Psoas muscle (tissue), 8 donors: ENCODE measurements at regions of chr1 and their contacts with region 1.

Region 1: GRCh38 chr1:180243517-180244221 is 13.6 kb downstream of the LHX4 start:
- DNase-seq: no peak
- ATAC-seq: no peak
- H3K4me3 ChIP-seq: no peak overlapping the region
- H3K27ac ChIP-seq: no peak overlapping the region
- H3K4me1 ChIP-seq: no peaks in the 10 kb centered on the region
- H3K27me3 ChIP-seq: peaks cover 0 to 45% (median 5%) of the 10 kb centered on the region in 3 donors
- CTCF ChIP-seq: no peak

Region 2: DNA sequence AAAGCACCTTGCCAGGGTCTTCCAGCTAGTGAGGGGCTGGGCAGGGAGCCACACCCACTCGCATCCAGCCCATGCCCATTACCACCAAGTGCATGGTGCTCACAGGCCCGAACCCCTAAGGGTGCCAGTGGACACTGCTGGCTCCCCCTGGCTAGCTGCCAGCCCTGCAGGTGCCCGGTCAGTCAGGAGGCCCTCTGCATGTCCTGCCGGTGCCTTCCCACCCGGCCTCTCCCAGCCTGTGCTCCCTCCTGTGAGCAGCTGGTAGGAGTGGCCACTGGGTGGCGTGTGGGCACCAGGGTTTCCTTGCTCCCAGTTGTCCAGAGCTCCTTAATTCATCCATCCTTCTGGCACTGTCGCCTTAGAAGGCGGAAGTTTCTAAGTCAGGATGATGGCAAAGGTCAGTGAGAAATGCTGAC is 55.6 kb before region 1 on chr1:
- intact Hi-C with region 1: loop called in 1 of 2 experiments (anchors 2 kb)
- DNase-seq: peak in 1 of 2 donors; percentile 69
- ATAC-seq: peak; percentile 16 to 65 (median 42)
- H3K4me3 ChIP-seq: no peak overlapping the region
- H3K27ac ChIP-seq: no peak overlapping the region
- H3K4me1 ChIP-seq: no peaks in the 10 kb centered on the region
- H3K27me3 ChIP-seq: no peaks in the 10 kb centered on the region
- CTCF ChIP-seq: peak; percentile 55